ENCODE measurements at regions of chr5 and their contacts with region 1.

Region 1: DNA sequence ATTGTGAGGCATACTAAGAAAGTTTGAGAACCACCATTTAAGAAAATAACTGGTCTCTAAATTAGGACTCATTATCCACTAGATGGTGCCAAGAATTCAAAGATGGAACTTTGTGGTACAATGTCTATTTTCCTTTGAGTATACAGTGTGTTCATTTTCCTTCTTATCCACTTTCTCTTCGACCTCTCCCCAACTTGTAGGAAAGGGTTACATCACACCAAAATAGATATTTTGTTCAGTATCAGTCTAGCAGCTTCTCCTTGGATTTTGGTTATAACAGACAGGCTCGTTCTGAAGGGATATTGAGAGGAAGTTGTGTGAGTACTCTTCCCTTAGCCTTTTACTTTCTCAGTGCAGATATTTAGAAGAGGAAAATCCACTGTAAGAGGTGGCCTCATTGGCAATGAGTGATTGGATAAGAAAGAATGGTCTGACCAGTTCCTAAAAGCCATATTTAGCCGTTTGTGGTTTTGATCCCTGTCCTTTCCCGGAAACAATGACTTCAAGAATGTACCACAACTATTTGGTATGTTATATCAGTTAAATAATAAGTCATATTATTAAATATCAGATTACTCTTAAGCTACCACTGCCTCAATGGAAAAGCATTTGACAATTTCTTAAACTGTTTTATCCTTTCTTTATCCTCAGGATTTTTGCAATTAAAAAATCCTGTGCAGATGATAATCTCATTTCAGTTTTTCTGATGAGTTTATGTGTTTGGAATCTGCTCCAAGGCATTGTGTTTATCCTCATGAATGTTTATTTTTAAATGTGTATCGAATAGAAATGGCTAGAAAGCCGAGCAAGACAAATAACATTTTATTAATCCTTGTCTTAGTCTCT is 69.0 kb upstream of the GRAMD2B start:
- DNase-seq: no peak
- H3K4me3 Mint-ChIP-seq: no peak overlapping the region
- H3K27ac Mint-ChIP-seq: no peak overlapping the region
- H3K4me1 Mint-ChIP-seq: peaks cover 14% of the 10 kb centered on the region
- H3K27me3 Mint-ChIP-seq: peaks cover 4% of the 10 kb centered on the region

Region 2: GRCh38 chr5:126208711-126209305 is 145.4 kb before region 1 on chr5:
- CTCF ChIA-PET with region 1: no interaction called
- DNase-seq: no peak
- H3K4me3 Mint-ChIP-seq: no peak overlapping the region
- H3K27ac Mint-ChIP-seq: no peak overlapping the region
- H3K4me1 Mint-ChIP-seq: no peaks in the 10 kb centered on the region
- H3K27me3 Mint-ChIP-seq: no peaks in the 10 kb centered on the region

Region 3: GRCh38 chr5:126315341-126315740 is 38.9 kb before region 1 on chr5:
- CTCF ChIA-PET with region 1: no interaction called
- DNase-seq: no peak
- H3K4me3 Mint-ChIP-seq: no peak overlapping the region
- H3K27ac Mint-ChIP-seq: no peak overlapping the region
- H3K4me1 Mint-ChIP-seq: no peaks in the 10 kb centered on the region
- H3K27me3 Mint-ChIP-seq: peaks cover 5% of the 10 kb centered on the region

Region 4: DNA sequence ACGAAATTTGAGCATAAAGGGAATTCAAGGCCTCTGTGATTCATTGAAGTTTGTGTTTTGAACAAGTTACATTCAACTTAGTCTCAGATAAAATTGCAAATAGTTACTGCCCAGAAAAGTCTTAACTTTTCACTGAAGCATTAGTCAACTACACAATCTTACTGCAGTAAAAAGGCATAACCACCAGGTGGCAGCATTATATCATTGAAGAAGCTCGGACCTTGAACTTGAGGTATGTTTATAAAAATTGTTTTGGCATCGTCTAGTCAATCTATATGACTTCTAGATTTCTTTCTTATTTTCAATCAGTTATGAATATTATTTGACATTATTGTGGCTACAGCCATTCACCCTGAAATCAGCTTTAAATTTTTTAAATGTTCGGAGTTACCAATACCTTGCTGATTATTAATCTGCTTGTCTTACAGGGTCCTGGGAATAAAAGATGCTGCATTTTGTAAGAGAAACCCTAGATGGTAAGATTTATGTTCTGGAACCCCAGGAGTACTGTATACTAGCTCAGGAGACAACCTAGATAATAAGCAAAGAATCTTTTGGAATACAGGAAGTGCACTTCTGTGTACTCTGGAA is 14.9 kb before region 1 on chr5:
- CTCF ChIA-PET with region 1: interaction called, 24 read pairs
- DNase-seq: peak; percentile 63
- H3K4me3 Mint-ChIP-seq: no peak overlapping the region
- H3K27ac Mint-ChIP-seq: no peak overlapping the region
- H3K4me1 Mint-ChIP-seq: no peaks in the 10 kb centered on the region
- H3K27me3 Mint-ChIP-seq: peaks cover 16% of the 10 kb centered on the region

Region 5: DNA sequence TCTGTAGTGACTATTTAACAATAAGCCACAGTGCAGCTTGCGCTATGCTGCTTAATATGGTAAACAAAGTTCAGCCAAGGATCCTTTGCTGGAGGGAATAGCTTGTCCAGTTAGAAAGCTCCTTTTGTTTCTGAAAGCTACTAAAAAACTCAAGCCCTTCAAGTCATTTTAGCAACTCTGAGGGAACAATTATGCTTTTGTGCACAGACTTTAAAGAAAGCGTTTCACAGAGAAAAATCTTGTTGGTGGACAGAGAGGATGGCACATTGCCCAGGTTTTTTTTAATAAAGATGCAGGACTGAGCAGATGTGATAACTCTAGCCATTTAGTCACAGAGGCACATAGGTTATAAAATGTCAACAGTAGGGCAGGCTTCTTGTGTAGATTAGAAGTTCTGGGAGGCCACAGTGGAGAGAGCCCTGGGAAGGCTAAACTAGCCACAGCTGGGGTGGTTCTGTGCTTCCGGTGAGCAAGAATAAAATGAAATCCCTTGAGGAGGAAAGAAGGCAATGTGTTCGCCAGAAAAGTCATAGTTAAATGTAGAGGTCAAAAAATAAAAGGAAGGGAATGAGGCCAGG is 177.4 kb after region 1 on chr5:
- CTCF ChIA-PET with region 1: interaction called, 23 read pairs
- DNase-seq: no peak
- H3K4me3 Mint-ChIP-seq: no peak overlapping the region
- H3K27ac Mint-ChIP-seq: no peak overlapping the region
- H3K4me1 Mint-ChIP-seq: no peaks in the 10 kb centered on the region
- H3K27me3 Mint-ChIP-seq: peaks cover 8% of the 10 kb centered on the region

Region 6: GRCh38 chr5:126536874-126537273 is 182.6 kb after region 1 on chr5:
- CTCF ChIA-PET with region 1: interaction called, 48 read pairs
- DNase-seq: no peak
- H3K4me3 Mint-ChIP-seq: no peak overlapping the region
- H3K27ac Mint-ChIP-seq: no peak overlapping the region
- H3K4me1 Mint-ChIP-seq: no peaks in the 10 kb centered on the region
- H3K27me3 Mint-ChIP-seq: peaks cover 5% of the 10 kb centered on the region

Region 7: GRCh38 chr5:126544087-126544740 is 190.0 kb after region 1 on chr5:
- CTCF ChIA-PET with region 1: interaction called, 48 read pairs
- DNase-seq: peak; percentile 58
- H3K4me3 Mint-ChIP-seq: no peak overlapping the region
- H3K27ac Mint-ChIP-seq: no peak overlapping the region
- H3K4me1 Mint-ChIP-seq: no peaks in the 10 kb centered on the region
- H3K27me3 Mint-ChIP-seq: peaks cover 3% of the 10 kb centered on the region